Activated naive CD8-positive, alpha-beta T cell treated with anti-CD3 and anti-CD28 coated beads, Interleukin-2, amount 10 ng/mL, durations not matched to agents 7 days and 5 days (primary cell): ENCODE measurements at regions of chr5 and their contacts with region 1.

Region 1: GRCh38 chr5:157219491-157220271 is 39.0 kb downstream of the ITK start:
- DNase-seq: no peak
- ATAC-seq: no peak
- H3K4me3 Mint-ChIP-seq: peak overlapping the region; percentile 66
- H3K27ac Mint-ChIP-seq: peak overlapping the region; percentile 99
- H3K4me1 Mint-ChIP-seq: peaks cover 77% of the 10 kb centered on the region
- H3K27me3 Mint-ChIP-seq: no peaks in the 10 kb centered on the region

Region 2: DNA sequence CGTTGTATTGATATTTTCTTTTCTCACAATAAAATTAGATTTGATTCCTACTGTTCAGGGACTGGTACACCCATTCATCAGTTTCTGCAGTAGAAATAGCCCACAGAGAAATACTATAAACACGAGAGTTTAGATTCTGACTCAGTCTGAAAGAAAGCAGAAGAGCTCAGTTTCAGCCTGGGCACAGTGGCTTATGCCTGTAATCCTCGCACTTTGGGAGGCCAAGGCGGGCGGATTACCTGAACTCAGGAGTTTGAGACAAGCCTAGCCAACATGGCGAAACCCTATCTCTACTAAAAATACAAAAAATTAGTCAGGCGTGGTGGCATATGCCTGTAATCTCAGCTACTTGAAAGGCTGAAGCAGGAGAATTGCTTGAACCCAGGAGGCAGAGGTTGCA is 30.5 kb before region 1 on chr5:
- POLR2A ChIA-PET with region 1: interaction called, 65 read pairs
- DNase-seq: no peak
- ATAC-seq: peak; percentile 24
- H3K4me3 Mint-ChIP-seq: peak overlapping the region; percentile 85
- H3K27ac Mint-ChIP-seq: peak overlapping the region; percentile 82
- H3K4me1 Mint-ChIP-seq: peaks cover 73% of the 10 kb centered on the region
- H3K27me3 Mint-ChIP-seq: no peaks in the 10 kb centered on the region

Region 3: GRCh38 chr5:157198277-157198986 is 21.2 kb before region 1 on chr5:
- POLR2A ChIA-PET with region 1: interaction called, 44 read pairs
- DNase-seq: peak; percentile 44
- ATAC-seq: peak; percentile 46
- H3K4me3 Mint-ChIP-seq: peak overlapping the region; percentile 67
- H3K27ac Mint-ChIP-seq: peak overlapping the region; percentile 68
- H3K4me1 Mint-ChIP-seq: peaks cover 77% of the 10 kb centered on the region
- H3K27me3 Mint-ChIP-seq: no peaks in the 10 kb centered on the region

Region 4: GRCh38 chr5:157204765-157205164 is 14.9 kb before region 1 on chr5:
- POLR2A ChIA-PET with region 1: interaction called, 44 read pairs
- DNase-seq: no peak
- ATAC-seq: peak; percentile 15
- H3K4me3 Mint-ChIP-seq: peak overlapping the region; percentile 66
- H3K27ac Mint-ChIP-seq: peak overlapping the region; percentile 77
- H3K4me1 Mint-ChIP-seq: peaks cover 71% of the 10 kb centered on the region
- H3K27me3 Mint-ChIP-seq: no peaks in the 10 kb centered on the region

Region 5: DNA sequence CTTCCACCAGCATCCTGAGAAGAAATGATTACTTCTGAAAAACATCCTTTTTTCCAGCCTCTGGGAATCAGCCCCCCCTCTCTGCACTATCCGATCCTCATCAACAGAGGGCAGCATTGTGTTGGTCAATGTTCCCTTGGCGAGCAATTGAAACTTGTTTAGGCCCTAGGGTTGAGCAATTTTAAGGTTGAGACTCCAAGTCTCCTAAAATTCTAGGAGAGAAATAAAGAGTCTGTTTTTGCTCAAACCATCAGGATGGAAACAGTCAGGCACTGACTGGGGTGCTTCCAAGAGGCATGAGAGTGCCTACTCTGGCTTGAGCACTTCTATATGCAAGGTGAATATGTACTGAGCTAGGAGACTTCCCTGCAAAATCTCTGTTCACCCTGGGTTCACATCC is 33.9 kb after region 1 on chr5:
- POLR2A ChIA-PET with region 1: interaction called, 22 read pairs
- DNase-seq: no peak
- ATAC-seq: no peak
- H3K4me3 Mint-ChIP-seq: peak overlapping the region; percentile 60
- H3K27ac Mint-ChIP-seq: peak overlapping the region; percentile 88
- H3K4me1 Mint-ChIP-seq: peaks cover 87% of the 10 kb centered on the region
- H3K27me3 Mint-ChIP-seq: no peaks in the 10 kb centered on the region

Region 6: GRCh38 chr5:157265714-157266285 is 46.1 kb after region 1 on chr5 and contains the start of gene CYFIP2:
- POLR2A ChIA-PET with region 1: interaction called, 16 read pairs
- DNase-seq: peak; percentile 91
- ATAC-seq: peak; percentile 80
- H3K4me3 Mint-ChIP-seq: peak within 1 kb of the TSS; percentile 93
- H3K27ac Mint-ChIP-seq: peak within 1 kb of the TSS; percentile 95
- H3K4me1 Mint-ChIP-seq: peaks cover 66% of the 10 kb centered on the region
- H3K27me3 Mint-ChIP-seq: no peaks in the 10 kb centered on the region
- total RNA-seq, gene CYFIP2: 458 to 480 TPM

Region 7: GRCh38 chr5:157290981-157291711 is 71.5 kb after region 1 on chr5:
- POLR2A ChIA-PET with region 1: no interaction called
- DNase-seq: no peak
- ATAC-seq: no peak
- H3K4me3 Mint-ChIP-seq: no peak overlapping the region
- H3K27ac Mint-ChIP-seq: peak overlapping the region; percentile 79
- H3K4me1 Mint-ChIP-seq: peaks cover 57% of the 10 kb centered on the region
- H3K27me3 Mint-ChIP-seq: no peaks in the 10 kb centered on the region